ENCODE measurements at regions of chr1 and their contacts with region 1.

Region 1: DNA sequence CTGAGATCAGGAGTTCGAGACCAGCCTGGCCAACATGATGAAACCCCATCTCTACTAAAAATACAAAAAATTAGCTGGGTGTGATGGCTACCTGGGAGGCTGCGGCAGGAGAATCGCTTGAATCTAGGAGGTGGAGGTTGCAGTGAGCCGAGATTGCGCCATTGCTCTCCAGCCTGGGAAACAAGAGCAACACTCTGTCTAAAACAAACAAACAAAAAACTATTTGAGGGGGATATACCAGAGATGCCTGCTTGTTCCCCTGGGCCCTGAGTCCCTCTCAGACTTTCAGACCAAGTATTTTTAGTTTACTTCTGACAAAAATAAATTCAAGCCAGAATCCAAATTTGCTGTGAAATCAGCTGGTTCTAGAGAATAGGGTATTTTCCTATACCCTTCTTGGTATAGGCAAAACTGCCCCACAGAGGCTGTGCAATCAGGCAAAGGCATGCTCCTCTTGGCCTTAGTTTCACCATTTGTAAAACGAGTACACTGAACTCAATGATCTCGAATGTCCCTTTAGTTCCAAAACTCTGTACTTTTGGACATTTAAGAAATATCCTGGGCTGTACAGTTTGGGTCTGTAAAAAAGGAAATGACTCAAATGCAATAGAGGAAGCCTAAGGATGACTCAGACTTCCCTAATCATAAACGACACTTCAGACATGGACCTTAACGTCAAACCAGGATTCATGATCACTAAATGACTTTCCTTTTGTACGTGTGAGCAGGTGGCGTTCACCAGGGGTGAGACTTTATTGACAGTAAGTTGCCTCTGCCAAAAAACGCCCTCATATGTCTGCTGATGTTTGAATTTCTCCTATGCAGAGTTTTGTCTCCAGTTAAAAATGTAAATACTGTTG is 16.1 kb downstream of the ENSA start:
- DNase-seq: peak; percentile 75
- H3K4me3 Mint-ChIP-seq: peak overlapping the region; percentile 62
- H3K27ac Mint-ChIP-seq: peak overlapping the region; percentile 97
- H3K4me1 Mint-ChIP-seq: peaks cover 66% of the 10 kb centered on the region
- H3K27me3 Mint-ChIP-seq: no peaks in the 10 kb centered on the region

Region 2: DNA sequence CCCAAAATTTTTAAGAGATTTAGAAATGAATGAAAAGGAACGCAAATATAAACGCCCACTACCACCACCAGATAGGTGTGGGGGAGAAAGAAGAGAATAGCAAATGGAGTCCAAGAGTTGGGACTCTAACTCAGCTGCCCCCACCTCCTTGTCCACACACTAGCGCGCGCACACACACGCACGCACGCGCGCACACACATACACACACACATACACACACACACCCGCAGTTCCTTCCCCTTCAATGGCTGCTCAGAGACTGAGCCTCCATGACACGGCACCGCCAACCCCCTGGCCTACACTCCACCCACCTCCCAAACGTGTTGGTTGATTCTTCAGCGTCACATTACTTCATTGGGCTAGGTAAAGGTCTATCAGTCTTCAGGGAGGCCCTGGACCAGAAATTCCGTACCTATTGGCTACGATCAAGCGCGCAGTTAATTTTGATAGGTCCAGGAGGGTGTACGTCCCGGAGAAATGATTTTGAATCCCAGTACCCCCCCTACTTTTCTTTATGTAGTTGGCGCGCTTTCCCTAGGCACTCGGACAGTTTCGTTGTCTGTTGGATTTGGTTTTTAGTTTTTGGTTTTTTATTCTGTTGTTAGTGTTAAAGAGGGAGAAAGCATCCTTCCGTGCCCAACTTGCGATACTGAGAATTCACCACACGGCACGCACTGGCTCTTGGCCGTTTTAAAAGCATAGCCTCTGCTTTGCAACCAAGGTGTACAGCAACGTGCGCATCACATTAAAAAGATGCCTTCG is 377.3 kb before region 1 on chr1 and contains the start of gene ANP32E:
- CTCF ChIA-PET with region 1: no interaction called
- POLR2A ChIA-PET with region 1: interaction called, 3 read pairs
- intact Hi-C with region 1: loop called (anchors 10 kb)
- DNase-seq: peak; percentile 97
- H3K4me3 Mint-ChIP-seq: no peak within 1 kb of the TSS
- H3K27ac Mint-ChIP-seq: no peak within 1 kb of the TSS
- H3K4me1 Mint-ChIP-seq: peaks cover 17% of the 10 kb centered on the region
- H3K27me3 Mint-ChIP-seq: no peaks in the 10 kb centered on the region
- total RNA-seq, gene ANP32E: 224 to 228 TPM

Region 3: DNA sequence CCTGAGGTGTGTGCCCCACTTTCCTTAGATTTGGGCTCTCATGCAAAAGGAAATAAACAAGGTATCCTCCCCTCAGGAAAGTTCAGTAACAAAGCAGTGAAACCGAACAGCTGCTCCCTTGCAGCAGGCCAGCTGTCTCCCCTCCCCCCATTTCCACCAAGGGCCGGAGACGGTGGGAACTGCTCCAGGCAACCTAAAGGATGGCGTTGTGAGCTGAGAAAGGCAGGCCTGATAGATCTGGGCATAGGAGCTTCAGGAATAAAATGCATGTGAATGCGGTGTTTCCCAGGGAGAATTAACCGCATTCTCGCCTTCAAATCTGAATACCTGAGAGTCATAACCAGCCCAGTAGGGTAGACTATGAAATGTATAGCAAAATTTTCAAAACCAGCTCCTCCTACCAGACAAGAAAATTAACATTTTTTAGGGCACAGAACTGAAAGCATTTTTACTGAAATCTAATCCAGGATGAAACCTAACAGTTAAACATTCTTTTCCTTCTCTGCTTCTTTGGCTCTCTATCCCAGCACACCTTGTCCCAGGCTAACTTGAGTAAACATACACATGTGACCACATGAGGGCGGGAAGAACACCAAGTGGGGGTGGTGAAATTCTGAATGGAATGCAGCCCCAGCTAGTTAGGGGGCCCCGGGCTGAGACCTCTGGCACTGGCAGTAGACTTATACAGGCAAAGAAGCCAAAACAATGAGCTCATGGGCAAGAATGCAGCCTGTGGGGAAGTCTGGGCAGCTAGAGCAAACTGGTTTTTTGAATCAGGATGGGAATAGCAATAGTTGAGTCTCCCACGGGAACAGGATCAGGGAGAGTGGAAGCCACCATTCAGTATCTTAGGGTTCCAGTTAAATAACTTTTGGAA is 45.3 kb before region 1 on chr1:
- CTCF ChIA-PET with region 1: interaction called, 243 read pairs
- POLR2A ChIA-PET with region 1: interaction called, 147 read pairs
- intact Hi-C with region 1: loop called (anchors 1 kb)
- DNase-seq: peak; percentile 68
- H3K4me3 Mint-ChIP-seq: peak overlapping the region; percentile 69
- H3K27ac Mint-ChIP-seq: peak overlapping the region; percentile 98
- H3K4me1 Mint-ChIP-seq: peaks cover 93% of the 10 kb centered on the region
- H3K27me3 Mint-ChIP-seq: no peaks in the 10 kb centered on the region

Region 4: DNA sequence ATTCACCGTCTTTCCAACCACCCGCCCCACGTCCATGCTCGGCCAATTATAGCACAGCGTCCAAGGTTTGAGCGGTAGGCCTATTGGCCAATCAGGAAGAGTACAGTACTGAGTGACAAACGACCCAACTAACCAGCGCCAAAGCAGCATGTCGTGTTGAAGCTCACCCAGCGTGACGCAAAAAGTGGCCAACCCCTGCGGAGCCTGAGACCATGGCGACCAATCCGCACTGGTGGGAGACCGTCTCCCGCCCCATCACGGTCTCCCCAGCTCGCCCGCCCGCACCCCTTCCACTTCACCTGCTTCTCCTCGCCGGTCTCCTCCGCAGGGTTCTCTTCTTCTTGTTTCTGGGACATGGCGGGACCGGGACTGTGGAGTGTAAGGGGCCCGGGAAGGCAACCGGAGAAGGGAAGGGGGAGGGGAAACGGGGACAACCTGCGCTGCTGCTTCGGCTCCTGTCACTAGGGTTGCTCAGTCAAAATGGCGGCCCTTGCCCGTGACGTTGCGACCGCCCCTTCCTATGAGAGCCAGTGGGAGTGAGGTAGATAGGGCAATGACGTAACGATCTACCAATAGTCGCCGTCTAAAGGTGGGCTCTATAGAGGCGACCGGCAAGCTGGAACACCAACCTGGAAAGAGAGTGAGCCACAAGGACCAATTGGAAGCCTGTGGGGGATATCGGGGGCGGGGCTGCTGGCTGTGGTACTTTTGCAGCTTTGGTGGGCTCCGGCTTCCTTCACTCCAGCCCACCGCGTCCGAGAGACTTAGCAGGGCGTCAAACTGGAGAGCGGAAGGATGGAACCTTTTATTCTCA is 16.0 kb after region 1 on chr1 and contains the start of gene ENSA:
- CTCF ChIA-PET with region 1: interaction called, 4 read pairs
- POLR2A ChIA-PET with region 1: interaction called, 7 read pairs
- intact Hi-C with region 1: loop called (anchors 1 kb)
- DNase-seq: peak; percentile 97
- H3K4me3 Mint-ChIP-seq: no peak within 1 kb of the TSS
- H3K27ac Mint-ChIP-seq: no peak within 1 kb of the TSS
- H3K4me1 Mint-ChIP-seq: peaks cover 41% of the 10 kb centered on the region
- H3K27me3 Mint-ChIP-seq: no peaks in the 10 kb centered on the region
- total RNA-seq, gene ENSA: 212 to 219 TPM

Region 5: DNA sequence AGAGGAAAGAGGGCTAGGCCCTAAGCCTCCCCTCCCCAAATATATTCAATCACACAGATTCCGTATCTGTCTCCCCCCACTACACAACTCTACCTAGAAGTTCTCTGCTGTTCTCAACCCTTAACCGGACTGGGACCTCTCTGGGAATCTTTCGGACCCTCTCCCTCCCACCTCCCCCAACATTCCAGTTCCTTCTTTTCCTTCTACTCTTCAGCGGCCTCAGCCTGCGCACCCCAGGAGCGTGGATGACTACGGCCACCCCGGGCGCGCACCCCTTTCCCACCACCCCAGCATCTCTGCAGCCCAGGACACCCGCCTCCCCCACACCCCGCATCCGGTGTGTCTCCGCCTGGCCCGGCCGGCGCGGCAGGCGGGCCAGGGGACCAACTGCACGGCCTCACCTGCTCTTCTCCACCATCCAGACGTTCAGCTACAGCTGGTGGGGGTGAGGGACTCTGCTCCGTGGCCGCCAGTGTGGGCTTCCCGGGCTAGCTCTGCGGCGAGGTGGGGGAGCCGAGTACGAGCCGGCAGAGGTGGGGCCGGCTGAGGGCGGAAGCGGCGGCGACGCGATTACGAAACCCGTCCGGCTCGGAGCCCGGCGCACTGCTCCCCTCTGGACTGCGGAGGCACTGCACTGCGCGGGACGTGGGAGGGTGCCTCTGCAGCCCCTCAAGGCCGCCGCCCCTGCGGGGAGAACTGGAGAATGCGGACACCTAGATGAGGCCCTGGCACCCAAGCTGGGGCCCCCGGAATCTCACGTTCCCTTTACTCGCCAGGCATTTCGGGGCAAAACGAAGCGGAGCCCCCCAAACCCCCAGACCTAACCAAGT is 446.0 kb after region 1 on chr1 and contains the start of gene CDC42SE1:
- CTCF ChIA-PET with region 1: no interaction called
- POLR2A ChIA-PET with region 1: no interaction called
- intact Hi-C with region 1: loop called (anchors 2 kb)
- DNase-seq: peak; percentile 89
- H3K4me3 Mint-ChIP-seq: peak within 1 kb of the TSS; percentile 98
- H3K27ac Mint-ChIP-seq: peak within 1 kb of the TSS; percentile 99
- H3K4me1 Mint-ChIP-seq: peaks cover 56% of the 10 kb centered on the region
- H3K27me3 Mint-ChIP-seq: no peaks in the 10 kb centered on the region
- total RNA-seq, gene CDC42SE1: 135 to 136 TPM